ENCODE measurements at regions of chr3 and their contacts with region 1.

Region 1: GRCh38 chr3:47989981-47990440 is 26.2 kb downstream of the MAP4 start:
- DNase-seq: peak; percentile 67 to 82 (median 77)
- H3K4me3 ChIP-seq: no peak overlapping the region
- H3K4me3 Mint-ChIP-seq: no peak overlapping the region
- H3K27ac ChIP-seq: no peak overlapping the region
- H3K27ac Mint-ChIP-seq: no peak overlapping the region
- H3K4me1 ChIP-seq: peaks cover 6 to 11% of the 10 kb centered on the region in 2 donors
- H3K4me1 Mint-ChIP-seq: peaks cover 9% of the 10 kb centered on the region
- H3K27me3 ChIP-seq: no peaks in the 10 kb centered on the region
- H3K27me3 Mint-ChIP-seq: no peaks in the 10 kb centered on the region
- CTCF ChIP-seq: peak; percentile 87

Region 2: GRCh38 chr3:47527952-47528718 is 461.9 kb before region 1 on chr3:
- intact Hi-C with region 1: loop called in 1 of 2 experiments (anchors 5 kb)
- DNase-seq: no peak
- H3K4me3 ChIP-seq: no peak overlapping the region
- H3K4me3 Mint-ChIP-seq: no peak overlapping the region
- H3K27ac ChIP-seq: no peak overlapping the region
- H3K27ac Mint-ChIP-seq: no peak overlapping the region
- H3K4me1 ChIP-seq: no peaks in the 10 kb centered on the region
- H3K4me1 Mint-ChIP-seq: peaks cover 4% of the 10 kb centered on the region
- H3K27me3 ChIP-seq: no peaks in the 10 kb centered on the region
- H3K27me3 Mint-ChIP-seq: peaks cover 2 to 8% (median 4%) of the 10 kb centered on the region in 3 donors
- CTCF ChIP-seq: no peak

Region 3: GRCh38 chr3:47824541-47825473 is 165.2 kb before region 1 on chr3:
- intact Hi-C with region 1: loop called (anchors 2 to 5 kb)
- DNase-seq: peak; percentile 54 to 74 (median 73)
- H3K4me3 ChIP-seq: peak overlapping the region; percentile 78 to 95 (median 92)
- H3K4me3 Mint-ChIP-seq: peak overlapping the region; percentile 85 to 91
- H3K27ac ChIP-seq: peak overlapping the region in 1 of 2 donors; percentile 66
- H3K27ac Mint-ChIP-seq: peak overlapping the region in 6 of 7 donors; percentile 57 to 88 (median 74)
- H3K4me1 ChIP-seq: peaks cover 10 to 15% of the 10 kb centered on the region in 2 donors
- H3K4me1 Mint-ChIP-seq: peaks cover 24% of the 10 kb centered on the region
- H3K27me3 ChIP-seq: no peaks in the 10 kb centered on the region
- H3K27me3 Mint-ChIP-seq: peaks cover 0 to 1% (median 1%) of the 10 kb centered on the region in 3 donors
- CTCF ChIP-seq: peak; percentile 88

Region 4: DNA sequence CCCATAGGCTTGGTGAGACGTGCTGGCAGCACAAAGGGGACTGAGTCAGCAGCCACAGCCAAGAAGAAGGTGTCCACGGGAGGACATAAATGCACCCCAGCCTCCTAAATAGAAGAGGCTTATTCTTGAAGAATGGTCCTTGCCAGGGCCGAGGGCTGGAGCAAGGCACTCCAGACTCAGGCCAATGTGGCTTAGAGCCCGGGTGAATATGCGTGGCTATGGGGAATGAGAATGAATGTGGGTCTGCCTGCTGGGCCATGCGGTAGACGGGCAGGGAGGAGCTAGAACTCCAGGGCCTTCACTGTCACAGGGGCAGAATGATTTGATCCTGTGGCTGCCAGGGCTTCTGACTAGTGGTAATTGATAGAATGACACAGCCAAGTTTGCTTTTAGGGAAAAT is 153.0 kb before region 1 on chr3:
- intact Hi-C with region 1: loop called in 1 of 2 experiments (anchors 2 kb)
- DNase-seq: no peak
- H3K4me3 ChIP-seq: no peak overlapping the region
- H3K4me3 Mint-ChIP-seq: no peak overlapping the region
- H3K27ac ChIP-seq: no peak overlapping the region
- H3K27ac Mint-ChIP-seq: peak overlapping the region in 2 of 7 donors; percentile 15 to 61
- H3K4me1 ChIP-seq: no peaks in the 10 kb centered on the region
- H3K4me1 Mint-ChIP-seq: no peaks in the 10 kb centered on the region
- H3K27me3 ChIP-seq: no peaks in the 10 kb centered on the region
- H3K27me3 Mint-ChIP-seq: peaks cover 0 to 1% (median 0%) of the 10 kb centered on the region in 3 donors
- CTCF ChIP-seq: no peak